Common myeloid progenitor, CD34-positive (primary cell): ENCODE measurements at regions of chr1 and their contacts with region 1.

Region 1: DNA sequence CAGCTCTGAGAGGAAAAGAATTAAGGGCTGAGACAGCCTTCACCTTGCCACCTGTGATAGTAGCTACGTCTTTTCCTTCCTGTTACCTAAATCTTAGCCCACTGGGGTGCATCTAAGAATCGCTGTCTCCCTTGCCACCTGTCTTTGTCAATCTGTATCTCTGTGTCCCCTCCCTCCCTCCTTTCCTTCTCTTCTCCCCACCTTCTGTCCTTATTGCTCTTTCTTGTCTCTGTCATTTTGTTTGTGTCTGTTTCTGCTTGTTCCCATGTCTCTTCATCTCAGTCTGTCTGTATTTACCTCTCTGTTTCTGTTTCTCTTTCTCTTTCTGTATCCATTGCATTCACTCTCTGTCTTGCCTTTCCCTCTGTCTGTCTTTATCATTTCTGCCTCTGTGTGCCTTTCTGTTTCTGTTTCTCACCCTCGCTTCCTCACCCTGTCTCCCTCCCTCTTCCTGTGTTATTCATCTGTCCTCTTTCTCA is 30.2 kb downstream of the SLC22A15 start:
- DNase-seq: no peak
- H3K4me3 ChIP-seq: no peak overlapping the region
- H3K27ac ChIP-seq: no peak overlapping the region
- H3K4me1 ChIP-seq: peaks cover 0 to 3% (median 0%) of the 10 kb centered on the region in 4 experiments
- H3K27me3 ChIP-seq: no peaks in the 10 kb centered on the region

Region 2: DNA sequence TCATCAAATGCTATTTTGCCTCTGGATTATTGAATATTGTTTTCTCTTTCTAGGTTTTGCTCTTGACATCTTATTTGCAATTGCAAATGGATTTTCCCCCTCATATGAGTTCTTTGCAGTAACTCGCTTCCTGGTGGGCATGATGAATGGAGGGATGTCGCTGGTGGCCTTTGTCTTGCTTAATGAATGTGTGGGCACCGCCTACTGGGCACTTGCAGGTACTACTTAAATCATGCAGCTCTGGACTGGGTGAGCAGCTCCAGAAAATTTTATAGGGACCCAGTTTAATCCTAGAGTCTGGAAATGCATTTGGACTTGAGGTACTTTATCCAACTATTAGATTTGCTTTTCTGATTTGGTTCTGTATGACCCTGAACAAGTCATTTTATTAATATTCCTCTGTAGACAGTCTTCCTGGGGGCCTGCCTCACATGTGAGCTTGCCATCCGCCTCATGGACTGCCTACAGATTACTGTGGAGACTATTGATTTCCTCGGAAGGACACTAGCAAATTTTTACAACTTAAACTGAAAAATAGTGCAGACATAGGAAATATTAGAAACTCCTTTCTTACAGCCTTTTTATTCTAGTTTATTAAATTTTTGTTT is 14.2 kb after region 1 on chr1:
- CTCF ChIA-PET with region 1: interaction called, 33 read pairs
- POLR2A ChIA-PET with region 1: no interaction called
- DNase-seq: peak; percentile 78 to 89 (median 88)
- H3K4me3 ChIP-seq: no peak overlapping the region
- H3K27ac ChIP-seq: no peak overlapping the region
- H3K4me1 ChIP-seq: peaks cover 0 to 4% (median 3%) of the 10 kb centered on the region in 4 experiments
- H3K27me3 ChIP-seq: no peaks in the 10 kb centered on the region